Pancreas (tissue), 10 donors: ENCODE measurements at regions of chr2 and their contacts with region 1.

Region 1: DNA sequence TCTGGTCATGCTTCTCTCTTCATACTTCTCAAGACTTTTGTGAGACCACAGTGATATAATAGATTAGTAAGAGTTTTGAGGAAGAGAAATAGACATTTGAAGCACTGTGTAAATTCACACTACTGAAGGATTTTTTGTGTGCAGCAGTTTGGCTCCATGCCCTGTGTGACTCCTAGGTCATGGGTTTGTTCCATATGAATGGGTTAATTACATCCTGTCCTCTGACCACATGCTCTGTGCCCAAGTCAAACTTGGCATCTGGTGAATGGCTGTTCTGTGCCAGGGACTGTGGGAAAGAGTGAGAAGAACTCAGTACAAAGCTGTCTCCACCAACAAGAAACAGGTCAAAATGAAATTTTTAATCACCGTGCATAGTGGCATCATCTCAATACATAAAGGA is 304.0 kb downstream of the LNPK start:
- DNase-seq: no peak
- ATAC-seq: no peak
- H3K4me3 ChIP-seq: no peak overlapping the region
- H3K27ac ChIP-seq: no peak overlapping the region
- H3K4me1 ChIP-seq: no peaks in the 10 kb centered on the region
- H3K27me3 ChIP-seq: peaks cover 0 to 8% (median 2%) of the 10 kb centered on the region in 4 donors
- CTCF ChIP-seq: no peak

Region 2: GRCh38 chr2:175552902-175553301 is 145.2 kb before region 1 on chr2:
- intact Hi-C with region 1: no loop called
- DNase-seq: no peak
- ATAC-seq: peak in 1 of 4 donors; percentile 50
- H3K4me3 ChIP-seq: no peak overlapping the region
- H3K27ac ChIP-seq: no peak overlapping the region
- H3K4me1 ChIP-seq: no peaks in the 10 kb centered on the region
- H3K27me3 ChIP-seq: no peaks in the 10 kb centered on the region
- CTCF ChIP-seq: no peak

Region 3: GRCh38 chr2:176088048-176088936 is 390.2 kb after region 1 on chr2:
- intact Hi-C with region 1: loop called in 1 of 3 experiments (anchors 5 kb)
- DNase-seq: peak; percentile 35 to 87 (median 60)
- ATAC-seq: peak; percentile 78 to 94 (median 92)
- H3K4me3 ChIP-seq: peak overlapping the region in 3 of 4 donors; percentile 26 to 45 (median 26)
- H3K27ac ChIP-seq: no peak overlapping the region
- H3K4me1 ChIP-seq: peaks cover 0 to 10% (median 0%) of the 10 kb centered on the region in 3 donors
- H3K27me3 ChIP-seq: peaks cover 5 to 94% (median 25%) of the 10 kb centered on the region in 4 donors
- CTCF ChIP-seq: peak; percentile 51 to 74 (median 66)